CD8-positive, alpha-beta T cell (primary cell): ENCODE measurements at regions of chr20 and their contacts with region 1.

Region 1: DNA sequence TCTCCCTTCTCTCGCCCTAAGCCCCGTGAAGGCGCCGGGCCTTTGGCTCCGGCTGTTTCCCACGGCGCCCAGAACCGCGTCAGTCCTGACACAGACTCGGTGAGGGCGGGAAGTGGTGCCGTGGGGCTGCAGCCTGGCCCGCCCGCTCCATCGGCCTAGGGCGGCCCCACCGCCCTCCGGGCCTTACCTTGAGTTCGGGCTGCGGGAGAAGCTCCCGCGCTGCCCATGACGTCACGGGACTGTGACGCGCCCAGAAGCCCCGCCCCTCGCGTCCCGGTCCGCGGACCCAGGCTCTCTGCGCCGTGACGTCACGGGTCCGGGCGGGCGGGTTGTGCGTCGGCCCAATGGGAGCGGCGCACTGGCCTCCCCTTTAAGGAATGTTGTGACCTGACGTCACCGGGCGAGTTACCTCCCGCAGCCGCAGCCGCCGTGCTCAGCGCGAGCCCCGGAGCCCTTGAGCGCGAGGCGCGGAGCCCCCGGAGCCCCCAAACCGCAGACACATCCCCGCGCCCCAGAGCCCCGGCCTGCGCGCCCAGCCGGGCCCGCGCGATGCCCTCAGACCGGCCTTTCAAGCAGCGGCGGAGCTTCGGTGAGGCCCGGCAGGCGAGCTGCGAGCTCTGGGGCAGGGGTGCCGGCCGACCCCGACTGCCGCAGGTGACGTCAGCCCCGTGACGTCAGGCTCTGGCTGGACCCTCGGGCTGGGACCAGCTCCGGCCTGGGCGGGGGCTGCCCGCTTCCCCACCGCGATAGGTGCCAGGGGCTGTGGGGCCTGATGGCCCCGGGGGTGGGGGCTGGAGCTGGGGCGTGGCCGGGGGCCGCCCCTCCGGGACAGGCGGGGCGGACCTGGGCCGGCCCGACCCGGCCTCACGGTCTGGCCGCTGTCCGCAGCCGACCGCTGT is at the start of gene MAP1LC3A:
- DNase-seq: peak; percentile 78 to 98 (median 90)
- ATAC-seq: peak; percentile 84
- H3K4me3 ChIP-seq: peak within 1 kb of the TSS; percentile 54 to 94
- H3K4me3 Mint-ChIP-seq: peak within 1 kb of the TSS; percentile 75
- H3K27ac ChIP-seq: peak within 1 kb of the TSS; percentile 79 to 97
- H3K27ac Mint-ChIP-seq: peak within 1 kb of the TSS; percentile 95
- H3K4me1 ChIP-seq: peaks cover 8% of the 10 kb centered on the region
- H3K4me1 Mint-ChIP-seq: peaks cover 12% of the 10 kb centered on the region
- H3K27me3 ChIP-seq: no peaks in the 10 kb centered on the region
- H3K27me3 Mint-ChIP-seq: no peaks in the 10 kb centered on the region
- CTCF ChIP-seq: no peak
- total RNA-seq, gene MAP1LC3A: 19.4 to 22.4 TPM

Region 2: GRCh38 chr20:34363062-34363464 is 195.5 kb before region 1 on chr20 and contains the start of gene ITCH:
- CTCF ChIA-PET with region 1: no interaction called
- POLR2A ChIA-PET with region 1: no interaction called
- intact Hi-C with region 1: loop called in 1 of 2 experiments (anchors 2 kb)
- DNase-seq: peak; percentile 80 to 96 (median 93)
- ATAC-seq: peak; percentile 99
- H3K4me3 ChIP-seq: peak within 1 kb of the TSS; percentile 92 to 93
- H3K4me3 Mint-ChIP-seq: peak within 1 kb of the TSS; percentile 99
- H3K27ac ChIP-seq: peak within 1 kb of the TSS; percentile 86 to 91
- H3K27ac Mint-ChIP-seq: peak within 1 kb of the TSS; percentile 99
- H3K4me1 ChIP-seq: peaks cover 40% of the 10 kb centered on the region
- H3K4me1 Mint-ChIP-seq: peaks cover 45% of the 10 kb centered on the region
- H3K27me3 ChIP-seq: no peaks in the 10 kb centered on the region
- H3K27me3 Mint-ChIP-seq: no peaks in the 10 kb centered on the region
- CTCF ChIP-seq: no peak
- total RNA-seq, gene ITCH: 50.4 to 55.2 TPM

Region 3: DNA sequence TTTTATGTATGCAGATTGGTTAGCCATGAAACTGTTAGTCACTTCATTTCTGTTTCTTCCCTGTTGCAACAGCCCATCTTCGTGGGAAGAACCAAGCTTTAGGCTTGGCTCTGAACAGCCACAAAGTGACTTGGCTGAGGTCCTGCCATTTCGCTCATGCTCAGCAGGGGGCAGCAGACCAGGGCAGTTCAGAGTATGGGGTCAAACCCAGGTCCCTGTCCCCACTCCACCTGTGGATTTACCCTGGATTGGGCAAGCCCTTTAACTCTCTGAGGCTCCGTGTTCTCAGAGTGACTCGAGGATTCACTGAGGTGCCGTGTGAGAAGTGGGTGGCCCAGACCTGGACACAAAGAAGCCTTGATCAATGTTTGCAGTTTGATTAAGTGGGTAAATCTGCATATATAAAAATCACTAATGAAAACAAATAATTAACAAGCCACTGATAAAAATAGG is 19.9 kb before region 1 on chr20:
- CTCF ChIA-PET with region 1: interaction called, 5 read pairs
- POLR2A ChIA-PET with region 1: no interaction called
- intact Hi-C with region 1: loop called in 1 of 2 experiments (anchors 1 kb)
- DNase-seq: peak in 8 of 9 experiments; percentile 15 to 65 (median 56)
- ATAC-seq: peak; percentile 67
- H3K4me3 ChIP-seq: no peak overlapping the region
- H3K4me3 Mint-ChIP-seq: no peak overlapping the region
- H3K27ac ChIP-seq: no peak overlapping the region
- H3K27ac Mint-ChIP-seq: no peak overlapping the region
- H3K4me1 ChIP-seq: no peaks in the 10 kb centered on the region
- H3K4me1 Mint-ChIP-seq: peaks cover 12% of the 10 kb centered on the region
- H3K27me3 ChIP-seq: no peaks in the 10 kb centered on the region
- H3K27me3 Mint-ChIP-seq: no peaks in the 10 kb centered on the region
- CTCF ChIP-seq: peak; percentile 83

Region 4: GRCh38 chr20:34575271-34575670 is 16.7 kb after region 1 on chr20:
- CTCF ChIA-PET with region 1: no interaction called
- POLR2A ChIA-PET with region 1: no interaction called
- intact Hi-C with region 1: no loop called
- DNase-seq: peak in 1 of 9 experiments; percentile 34
- ATAC-seq: no peak
- H3K4me3 ChIP-seq: no peak overlapping the region
- H3K4me3 Mint-ChIP-seq: no peak overlapping the region
- H3K27ac ChIP-seq: no peak overlapping the region
- H3K27ac Mint-ChIP-seq: no peak overlapping the region
- H3K4me1 ChIP-seq: no peaks in the 10 kb centered on the region
- H3K4me1 Mint-ChIP-seq: peaks cover 6% of the 10 kb centered on the region
- H3K27me3 ChIP-seq: no peaks in the 10 kb centered on the region
- H3K27me3 Mint-ChIP-seq: no peaks in the 10 kb centered on the region
- CTCF ChIP-seq: no peak

Region 5: DNA sequence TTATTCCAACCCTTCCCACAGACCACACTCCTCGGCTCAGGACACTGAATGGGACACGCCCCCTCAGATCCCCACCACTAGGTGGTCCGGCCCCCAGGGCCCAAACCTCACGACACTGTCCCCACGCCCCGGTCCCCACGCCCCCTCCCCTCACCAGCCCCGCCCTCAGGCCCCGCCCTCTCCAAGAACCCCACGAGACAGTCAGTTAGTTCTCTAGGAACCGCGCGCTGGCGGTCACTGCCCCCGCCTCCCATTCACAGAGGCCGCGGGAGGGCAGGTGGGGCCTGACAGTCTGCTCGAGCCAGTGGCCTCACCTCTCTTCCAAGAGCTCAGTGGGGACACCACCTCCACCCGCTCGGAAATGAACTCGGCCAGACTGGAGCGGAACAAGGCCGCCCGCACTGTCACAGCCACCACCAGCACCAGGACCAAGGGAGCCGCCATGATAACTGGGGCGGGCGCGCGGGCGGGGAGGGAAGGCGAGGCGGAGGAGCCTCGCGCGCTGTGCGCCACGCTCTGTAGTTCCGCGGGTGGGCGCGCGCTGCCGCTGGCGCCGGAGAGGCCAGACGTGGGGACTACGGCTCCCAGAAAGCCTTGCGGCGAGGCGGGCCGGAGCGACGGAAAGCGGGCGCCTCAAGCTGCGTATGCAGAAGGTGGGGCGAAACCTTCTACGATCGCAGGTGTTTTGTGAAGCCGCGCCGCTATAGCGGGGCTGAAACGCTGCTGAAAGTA is 118.2 kb after region 1 on chr20 and contains the start of gene PIGU:
- CTCF ChIA-PET with region 1: interaction called, 3 read pairs
- POLR2A ChIA-PET with region 1: interaction called, 3 read pairs
- intact Hi-C with region 1: loop called in 1 of 2 experiments (anchors 1 kb)
- DNase-seq: peak; percentile 92 to 98 (median 96)
- ATAC-seq: peak; percentile 96
- H3K4me3 ChIP-seq: peak within 1 kb of the TSS; percentile 80 to 94
- H3K4me3 Mint-ChIP-seq: peak within 1 kb of the TSS; percentile 97
- H3K27ac ChIP-seq: peak within 1 kb of the TSS; percentile 83 to 90
- H3K27ac Mint-ChIP-seq: peak within 1 kb of the TSS; percentile 96
- H3K4me1 ChIP-seq: peaks cover 16% of the 10 kb centered on the region
- H3K4me1 Mint-ChIP-seq: peaks cover 22% of the 10 kb centered on the region
- H3K27me3 ChIP-seq: no peaks in the 10 kb centered on the region
- H3K27me3 Mint-ChIP-seq: no peaks in the 10 kb centered on the region
- CTCF ChIP-seq: no peak
- total RNA-seq, gene PIGU: 3.3 to 5.2 TPM

Region 6: DNA sequence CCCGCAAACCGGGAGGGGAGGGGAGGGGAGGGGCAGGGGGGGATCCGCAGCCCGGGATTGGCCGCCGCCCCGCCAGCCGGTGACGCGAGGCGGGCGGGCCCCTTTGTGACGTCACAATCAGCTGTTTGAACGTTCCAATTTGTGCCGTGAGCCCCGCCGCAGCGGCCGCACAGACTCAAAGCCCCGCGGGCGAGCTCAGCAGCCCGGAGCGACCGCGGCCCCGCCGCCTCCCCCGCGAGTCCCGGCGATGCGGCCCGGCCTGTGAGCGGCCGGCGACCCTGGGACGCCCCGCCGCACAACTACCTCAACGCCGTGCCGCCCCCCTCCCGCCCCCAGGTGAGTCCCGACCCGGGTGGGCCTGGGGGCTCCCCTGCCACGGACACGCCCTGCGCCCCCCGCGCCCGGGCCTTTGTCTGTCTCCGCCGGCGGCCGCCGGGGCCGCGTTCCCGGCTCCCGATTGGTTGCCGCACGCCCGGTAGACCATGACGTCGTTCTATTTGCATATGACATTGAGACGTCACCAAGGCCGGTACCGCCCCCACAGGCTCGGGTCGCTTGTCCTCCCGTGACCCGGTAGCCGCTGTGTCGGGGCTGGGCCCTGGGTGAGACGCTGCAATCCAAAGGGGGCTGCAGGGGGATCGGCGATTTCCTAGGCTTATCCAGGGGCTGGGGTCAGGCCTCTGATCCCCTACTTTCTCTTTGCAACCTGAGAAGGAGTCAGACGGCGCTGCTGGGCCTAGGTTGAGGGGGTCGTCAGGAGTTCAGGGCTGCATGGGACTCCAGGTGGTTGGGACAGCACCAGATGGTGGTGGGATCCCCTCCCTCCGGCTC is 145.8 kb after region 1 on chr20 and contains the start of gene TP53INP2:
- CTCF ChIA-PET with region 1: interaction called, 5 read pairs
- POLR2A ChIA-PET with region 1: no interaction called
- intact Hi-C with region 1: loop called (anchors 1 kb)
- DNase-seq: peak; percentile 71 to 96 (median 87)
- ATAC-seq: peak; percentile 53
- H3K4me3 ChIP-seq: peak within 1 kb of the TSS; percentile 78 to 96
- H3K4me3 Mint-ChIP-seq: peak within 1 kb of the TSS; percentile 93
- H3K27ac ChIP-seq: peak within 1 kb of the TSS; percentile 71 to 96
- H3K27ac Mint-ChIP-seq: peak within 1 kb of the TSS; percentile 95
- H3K4me1 ChIP-seq: peaks cover 14% of the 10 kb centered on the region
- H3K4me1 Mint-ChIP-seq: peaks cover 22% of the 10 kb centered on the region
- H3K27me3 ChIP-seq: peaks cover 0 to 6% of the 10 kb centered on the region in 2 experiments
- H3K27me3 Mint-ChIP-seq: peaks cover 8% of the 10 kb centered on the region
- CTCF ChIP-seq: no peak
- total RNA-seq, gene TP53INP2: 101 to 103 TPM

Region 7: DNA sequence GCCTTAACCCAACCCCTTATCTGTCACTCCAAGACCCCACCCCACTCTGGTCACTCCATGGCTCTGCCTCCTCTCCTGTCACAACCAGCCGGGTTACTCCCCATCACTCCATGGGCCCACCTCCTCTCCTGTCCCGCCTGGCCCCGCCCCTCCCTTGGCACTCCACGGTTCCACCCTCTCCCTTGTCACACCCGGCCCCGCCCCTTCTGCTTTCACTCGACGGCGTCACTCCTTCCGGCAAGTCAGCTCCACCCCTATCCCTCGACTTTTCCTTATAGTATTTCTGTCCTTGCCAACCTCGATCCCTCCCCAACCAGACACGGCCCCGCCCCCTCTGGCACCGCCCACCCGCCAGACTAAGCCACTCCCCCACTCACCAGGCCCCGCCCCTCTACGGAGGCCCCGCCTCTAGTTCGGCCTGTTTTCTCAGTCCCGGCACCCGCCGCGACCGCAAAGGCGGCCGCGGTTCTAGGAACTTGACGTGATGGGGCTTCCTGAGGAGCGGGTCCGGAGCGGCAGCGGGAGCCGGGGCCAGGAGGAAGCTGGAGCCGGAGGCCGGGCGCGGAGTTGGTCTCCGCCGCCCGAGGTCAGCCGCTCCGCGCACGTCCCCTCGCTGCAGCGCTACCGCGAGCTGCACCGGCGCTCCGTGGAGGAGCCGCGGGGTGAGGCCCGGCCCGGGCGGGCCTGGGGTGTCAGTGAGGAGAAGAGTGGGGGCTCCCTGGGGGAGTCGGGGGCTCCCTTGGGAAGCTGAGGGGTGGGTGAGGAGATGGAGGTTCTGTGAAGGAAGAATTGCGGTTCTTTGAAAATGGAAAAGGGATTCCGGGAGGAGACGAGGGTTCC is 317.8 kb after region 1 on chr20 and contains the start of gene ACSS2:
- CTCF ChIA-PET with region 1: no interaction called
- POLR2A ChIA-PET with region 1: no interaction called
- intact Hi-C with region 1: loop called in 1 of 2 experiments (anchors 2 kb)
- DNase-seq: peak; percentile 85 to 97 (median 91)
- ATAC-seq: peak; percentile 85
- H3K4me3 ChIP-seq: peak within 1 kb of the TSS; percentile 55 to 68
- H3K4me3 Mint-ChIP-seq: peak within 1 kb of the TSS; percentile 89
- H3K27ac ChIP-seq: peak within 1 kb of the TSS in 1 of 2 experiments; percentile 24
- H3K27ac Mint-ChIP-seq: peak within 1 kb of the TSS; percentile 57
- H3K4me1 ChIP-seq: peaks cover 46% of the 10 kb centered on the region
- H3K4me1 Mint-ChIP-seq: peaks cover 54% of the 10 kb centered on the region
- H3K27me3 ChIP-seq: no peaks in the 10 kb centered on the region
- H3K27me3 Mint-ChIP-seq: no peaks in the 10 kb centered on the region
- CTCF ChIP-seq: no peak
- total RNA-seq, gene ACSS2: 6.5 to 12.7 TPM